ENCODE measurements at regions of chr16 and their contacts with region 1.

Region 1: DNA sequence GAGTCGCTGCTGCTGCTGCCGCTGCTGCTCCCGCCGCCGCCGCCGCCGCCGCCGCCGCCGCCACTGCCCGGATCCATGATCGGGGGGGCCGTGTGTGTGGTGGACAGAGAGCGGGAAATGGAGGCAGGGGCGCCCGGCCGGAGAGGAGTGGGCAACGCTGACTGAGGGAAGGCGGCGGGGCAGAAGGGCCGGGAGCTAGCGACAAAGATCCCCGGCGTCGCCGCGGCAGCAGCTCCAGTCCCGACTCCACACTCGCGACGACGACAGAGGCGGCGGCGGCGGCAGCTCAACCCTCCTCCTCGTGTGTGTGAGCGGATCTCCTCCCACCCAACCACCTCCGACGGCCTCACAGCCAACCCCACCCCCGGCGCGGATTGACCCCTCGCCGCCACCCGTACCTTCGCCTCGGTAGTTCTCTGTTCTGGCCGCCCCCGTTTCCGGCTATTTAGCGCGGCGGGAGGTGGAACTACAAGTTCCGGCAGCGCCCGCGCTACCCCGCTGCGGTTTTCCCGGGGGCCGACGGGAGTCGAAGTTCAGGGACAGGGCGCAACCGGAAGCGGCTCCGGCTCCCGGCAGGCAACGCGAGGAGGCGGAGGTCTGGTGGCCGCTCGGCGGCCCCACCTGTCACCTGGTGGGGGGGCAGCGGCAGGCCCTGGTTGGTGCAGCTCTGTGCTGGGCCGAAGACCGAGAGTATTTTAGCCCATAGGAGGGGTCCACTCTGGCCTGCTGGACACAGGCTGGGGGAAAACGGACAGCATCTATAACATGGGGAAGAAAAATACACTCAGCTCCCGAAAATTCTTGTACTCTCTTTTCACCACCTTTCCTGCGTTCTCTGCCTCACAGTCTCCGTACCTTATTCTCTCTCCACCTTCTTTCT is at the start of gene GSPT1:
- DNase-seq: peak; percentile 99 to 100 (median 100)
- ATAC-seq: peak; percentile 97 to 98
- H3K4me3 ChIP-seq: peak within 1 kb of the TSS; percentile 90
- H3K27ac ChIP-seq: peak within 1 kb of the TSS; percentile 85
- H3K4me1 ChIP-seq: peaks cover 3% of the 10 kb centered on the region
- H3K27me3 ChIP-seq: no peaks in the 10 kb centered on the region
- total RNA-seq, gene GSPT1: 89.1 to 105 (median 96.2) TPM

Region 2: GRCh38 chr16:11742539-11743307 is 173.2 kb before region 1 on chr16 and contains the start of gene TXNDC11:
- intact Hi-C with region 1: loop called in 1 of 4 experiments (anchors 10 kb)
- DNase-seq: peak; percentile 100
- ATAC-seq: peak; percentile 98 to 99
- H3K4me3 ChIP-seq: peak within 1 kb of the TSS; percentile 97
- H3K27ac ChIP-seq: peak within 1 kb of the TSS; percentile 86
- H3K4me1 ChIP-seq: peaks cover 2% of the 10 kb centered on the region
- H3K27me3 ChIP-seq: no peaks in the 10 kb centered on the region
- total RNA-seq, gene TXNDC11: 22.0 to 29.4 (median 23.9) TPM

Region 3: GRCh38 chr16:12120217-12120981 is 204.5 kb after region 1 on chr16:
- intact Hi-C with region 1: no loop called
- DNase-seq: peak; percentile 63 to 76 (median 64)
- ATAC-seq: peak; percentile 86 to 94
- H3K4me3 ChIP-seq: no peak overlapping the region
- H3K27ac ChIP-seq: no peak overlapping the region
- H3K4me1 ChIP-seq: peaks cover 2% of the 10 kb centered on the region
- H3K27me3 ChIP-seq: no peaks in the 10 kb centered on the region